ENCODE measurements at regions of chr17 and their contacts with region 1.

Region 1: DNA sequence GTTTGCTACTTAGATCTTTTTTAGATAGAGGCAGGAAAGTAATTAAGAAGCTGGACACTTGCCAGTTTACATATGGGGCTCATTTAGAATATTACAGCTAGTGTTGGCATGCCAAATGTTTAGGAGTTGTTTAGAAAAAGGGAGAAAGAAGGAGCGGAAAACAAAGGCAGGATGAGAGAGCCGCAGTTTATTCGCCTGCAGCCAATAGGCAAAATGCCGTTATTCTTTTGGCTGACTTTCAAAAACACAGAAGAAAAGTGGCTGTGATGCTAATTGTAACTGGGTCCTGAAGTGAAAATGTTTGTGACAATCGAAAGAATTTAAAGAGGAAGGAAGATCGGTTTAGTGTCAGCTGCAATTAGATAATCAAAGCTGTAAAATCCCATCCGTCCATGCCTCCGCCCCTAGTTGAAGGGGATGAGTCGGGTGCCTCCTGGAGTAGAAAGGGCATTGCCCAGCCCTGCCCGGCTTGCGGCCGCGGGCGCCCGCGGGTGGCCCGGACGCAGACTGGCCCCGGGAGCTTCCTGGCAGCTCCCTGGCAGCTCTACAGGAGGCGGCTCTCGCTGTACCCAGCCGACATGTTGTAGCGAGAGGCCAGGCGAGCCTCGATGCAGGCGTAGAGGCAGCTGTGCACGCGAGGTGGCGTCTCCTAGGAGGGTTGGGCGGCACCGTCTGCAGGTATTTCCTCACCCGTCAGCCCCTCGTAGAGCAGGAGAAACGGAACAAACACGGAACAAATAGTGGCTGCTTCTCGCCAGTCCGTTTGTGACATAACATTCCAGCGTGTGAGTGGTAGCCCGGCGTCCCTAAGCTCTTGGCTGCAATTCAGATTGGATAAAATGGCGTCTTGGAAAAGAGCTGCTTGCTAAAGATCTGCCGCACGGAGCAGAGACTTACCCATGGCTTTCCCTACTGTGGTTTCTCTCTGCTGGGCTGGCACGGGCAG is 82.2 kb downstream of the TNRC6C start:
- DNase-seq: peak; percentile 66 to 81
- ATAC-seq: peak; percentile 97 to 98
- H3K4me3 ChIP-seq: peak overlapping the region; percentile 47
- H3K27ac ChIP-seq: peak overlapping the region; percentile 77 to 89
- H3K4me1 ChIP-seq: peaks cover 11% of the 10 kb centered on the region; the same call in 2 of the 3 replicates
- CTCF ChIP-seq: no peak
- EP300 ChIP-seq: no peak
- POLR2A ChIP-seq: peak; percentile 88
- RAD21 ChIP-seq: no peak

Region 2: DNA sequence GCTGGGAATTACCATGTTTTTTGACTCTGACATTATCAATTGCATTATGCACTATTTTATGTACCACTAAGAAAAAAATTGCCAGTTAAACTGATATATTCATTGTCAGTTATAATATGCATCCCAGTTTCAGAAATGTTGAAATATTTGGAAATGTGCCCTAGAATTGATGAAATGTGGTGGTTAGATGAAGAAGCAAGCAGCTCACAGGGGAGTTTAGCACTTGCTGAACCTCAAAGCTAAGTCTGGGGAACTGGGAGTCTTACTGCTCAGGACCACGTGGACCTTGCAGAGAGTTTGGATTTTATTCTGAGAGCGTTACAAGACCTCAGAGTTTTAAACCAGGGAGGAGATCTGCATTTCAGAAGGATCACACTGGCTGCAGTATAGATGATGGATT is 14.3 kb before region 1 on chr17:
- CTCF ChIA-PET with region 1: interaction called, 259 read pairs
- POLR2A ChIA-PET with region 1: interaction called, 9 read pairs
- DNase-seq: no peak
- ATAC-seq: no peak
- H3K4me3 ChIP-seq: no peak overlapping the region
- H3K27ac ChIP-seq: no peak overlapping the region
- H3K4me1 ChIP-seq: no peaks in the 10 kb centered on the region
- CTCF ChIP-seq: no peak
- EP300 ChIP-seq: no peak
- POLR2A ChIP-seq: no peak
- RAD21 ChIP-seq: no peak

Region 3: GRCh38 chr17:78051186-78051972 is 10.7 kb after region 1 on chr17:
- CTCF ChIA-PET with region 1: interaction called, 10 read pairs
- POLR2A ChIA-PET with region 1: no interaction called
- DNase-seq: no peak
- ATAC-seq: no peak
- H3K4me3 ChIP-seq: no peak overlapping the region
- H3K27ac ChIP-seq: no peak overlapping the region
- H3K4me1 ChIP-seq: no peaks in the 10 kb centered on the region
- CTCF ChIP-seq: no peak
- EP300 ChIP-seq: no peak
- POLR2A ChIP-seq: no peak
- RAD21 ChIP-seq: no peak

Measured in A549 (cell line).